B cell (primary cell): ENCODE measurements at regions of chr18 and their contacts with region 1.

Region 1: GRCh38 chr18:2985628-2986027 is 27.3 kb downstream of the LPIN2 start:
- DNase-seq: peak; percentile 72
- ATAC-seq: peak; percentile 69
- H3K4me3 ChIP-seq: no peak overlapping the region
- H3K4me3 Mint-ChIP-seq: no peak overlapping the region
- H3K27ac ChIP-seq: no peak overlapping the region
- H3K27ac Mint-ChIP-seq: no peak overlapping the region
- H3K4me1 ChIP-seq: peaks cover 32 to 51% of the 10 kb centered on the region in 2 donors
- H3K4me1 Mint-ChIP-seq: peaks cover 51% of the 10 kb centered on the region
- H3K27me3 ChIP-seq: no peaks in the 10 kb centered on the region
- H3K27me3 Mint-ChIP-seq: no peaks in the 10 kb centered on the region
- CTCF ChIP-seq: peak; percentile 81

Region 2: GRCh38 chr18:2917259-2918047 is 68.2 kb before region 1 on chr18:
- CTCF ChIA-PET with region 1: interaction called, 10 read pairs
- POLR2A ChIA-PET with region 1: no interaction called
- intact Hi-C with region 1: no loop called
- DNase-seq: peak; percentile 60
- ATAC-seq: peak; percentile 86
- H3K4me3 ChIP-seq: peak overlapping the region in 2 of 5 experiments; percentile 20 to 34
- H3K4me3 Mint-ChIP-seq: peak overlapping the region; percentile 79
- H3K27ac ChIP-seq: peak overlapping the region; percentile 55 to 74
- H3K27ac Mint-ChIP-seq: peak overlapping the region; percentile 92
- H3K4me1 ChIP-seq: peaks cover 21 to 26% of the 10 kb centered on the region in 2 donors
- H3K4me1 Mint-ChIP-seq: peaks cover 38% of the 10 kb centered on the region
- H3K27me3 ChIP-seq: no peaks in the 10 kb centered on the region
- H3K27me3 Mint-ChIP-seq: no peaks in the 10 kb centered on the region
- CTCF ChIP-seq: no peak

Region 3: GRCh38 chr18:2932247-2933181 is 53.1 kb before region 1 on chr18:
- CTCF ChIA-PET with region 1: interaction called, 255 read pairs
- POLR2A ChIA-PET with region 1: interaction called, 6 read pairs
- intact Hi-C with region 1: loop called (anchors 1 kb)
- DNase-seq: peak; percentile 78
- ATAC-seq: peak; percentile 73
- H3K4me3 ChIP-seq: no peak overlapping the region
- H3K4me3 Mint-ChIP-seq: no peak overlapping the region
- H3K27ac ChIP-seq: no peak overlapping the region
- H3K27ac Mint-ChIP-seq: peak overlapping the region; percentile 64
- H3K4me1 ChIP-seq: peaks cover 0 to 4% of the 10 kb centered on the region in 2 donors
- H3K4me1 Mint-ChIP-seq: peaks cover 8% of the 10 kb centered on the region
- H3K27me3 ChIP-seq: no peaks in the 10 kb centered on the region
- H3K27me3 Mint-ChIP-seq: no peaks in the 10 kb centered on the region
- CTCF ChIP-seq: peak; percentile 92

Region 4: DNA sequence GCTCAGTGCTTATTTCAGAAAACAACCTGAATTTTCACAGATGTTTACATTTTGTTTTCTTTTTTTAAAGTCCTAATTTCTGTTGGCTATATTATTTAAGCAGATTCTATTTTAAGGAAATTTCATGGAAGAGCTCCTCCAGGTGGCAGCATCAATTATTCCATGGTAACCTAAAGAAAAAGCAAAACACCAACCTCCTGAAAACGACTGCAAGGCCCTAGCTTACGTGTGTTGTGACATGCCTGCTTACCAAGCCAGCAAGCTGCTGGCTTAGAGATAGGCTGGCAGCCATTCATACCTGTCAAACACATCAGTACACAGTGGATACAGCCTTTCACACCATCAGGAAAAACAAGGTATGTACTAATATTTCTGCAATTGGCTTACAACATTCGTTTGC is 37.6 kb before region 1 on chr18:
- CTCF ChIA-PET with region 1: interaction called, 37 read pairs
- POLR2A ChIA-PET with region 1: no interaction called
- intact Hi-C with region 1: no loop called
- DNase-seq: no peak
- ATAC-seq: no peak
- H3K4me3 ChIP-seq: no peak overlapping the region
- H3K4me3 Mint-ChIP-seq: no peak overlapping the region
- H3K27ac ChIP-seq: no peak overlapping the region
- H3K27ac Mint-ChIP-seq: no peak overlapping the region
- H3K4me1 ChIP-seq: no peaks in the 10 kb centered on the region
- H3K4me1 Mint-ChIP-seq: no peaks in the 10 kb centered on the region
- H3K27me3 ChIP-seq: no peaks in the 10 kb centered on the region
- H3K27me3 Mint-ChIP-seq: no peaks in the 10 kb centered on the region
- CTCF ChIP-seq: no peak

Region 5: GRCh38 chr18:2971741-2972552 is 13.7 kb before region 1 on chr18:
- CTCF ChIA-PET with region 1: interaction called, 71 read pairs
- POLR2A ChIA-PET with region 1: interaction called, 10 read pairs
- intact Hi-C with region 1: loop called (anchors 1 kb)
- DNase-seq: peak; percentile 86
- ATAC-seq: peak; percentile 81
- H3K4me3 ChIP-seq: peak overlapping the region; percentile 18 to 58 (median 47)
- H3K4me3 Mint-ChIP-seq: peak overlapping the region; percentile 88
- H3K27ac ChIP-seq: peak overlapping the region; percentile 89 to 91
- H3K27ac Mint-ChIP-seq: peak overlapping the region; percentile 96
- H3K4me1 ChIP-seq: peaks cover 64 to 66% of the 10 kb centered on the region in 2 donors
- H3K4me1 Mint-ChIP-seq: peaks cover 70% of the 10 kb centered on the region
- H3K27me3 ChIP-seq: no peaks in the 10 kb centered on the region
- H3K27me3 Mint-ChIP-seq: no peaks in the 10 kb centered on the region
- CTCF ChIP-seq: no peak

Region 6: GRCh38 chr18:3055818-3056217 is 70.2 kb after region 1 on chr18:
- CTCF ChIA-PET with region 1: interaction called, 59 read pairs
- POLR2A ChIA-PET with region 1: no interaction called
- intact Hi-C with region 1: loop called (anchors 2 kb)
- DNase-seq: no peak
- ATAC-seq: no peak
- H3K4me3 ChIP-seq: no peak overlapping the region
- H3K4me3 Mint-ChIP-seq: no peak overlapping the region
- H3K27ac ChIP-seq: no peak overlapping the region
- H3K27ac Mint-ChIP-seq: no peak overlapping the region
- H3K4me1 ChIP-seq: peaks cover 12 to 13% of the 10 kb centered on the region in 2 donors
- H3K4me1 Mint-ChIP-seq: peaks cover 13% of the 10 kb centered on the region
- H3K27me3 ChIP-seq: no peaks in the 10 kb centered on the region
- H3K27me3 Mint-ChIP-seq: peaks cover 18% of the 10 kb centered on the region
- CTCF ChIP-seq: no peak

Region 7: GRCh38 chr18:3129053-3129864 is 143.6 kb after region 1 on chr18:
- CTCF ChIA-PET with region 1: interaction called, 22 read pairs
- POLR2A ChIA-PET with region 1: no interaction called
- intact Hi-C with region 1: no loop called
- DNase-seq: peak; percentile 80
- ATAC-seq: peak; percentile 98
- H3K4me3 ChIP-seq: no peak overlapping the region
- H3K4me3 Mint-ChIP-seq: peak overlapping the region; percentile 4
- H3K27ac ChIP-seq: no peak overlapping the region
- H3K27ac Mint-ChIP-seq: no peak overlapping the region
- H3K4me1 ChIP-seq: peaks cover 0 to 4% of the 10 kb centered on the region in 2 donors
- H3K4me1 Mint-ChIP-seq: peaks cover 6% of the 10 kb centered on the region
- H3K27me3 ChIP-seq: no peaks in the 10 kb centered on the region
- H3K27me3 Mint-ChIP-seq: no peaks in the 10 kb centered on the region
- CTCF ChIP-seq: peak; percentile 89